ENCODE measurements at regions of chr4 and their contacts with region 1.

Region 1: DNA sequence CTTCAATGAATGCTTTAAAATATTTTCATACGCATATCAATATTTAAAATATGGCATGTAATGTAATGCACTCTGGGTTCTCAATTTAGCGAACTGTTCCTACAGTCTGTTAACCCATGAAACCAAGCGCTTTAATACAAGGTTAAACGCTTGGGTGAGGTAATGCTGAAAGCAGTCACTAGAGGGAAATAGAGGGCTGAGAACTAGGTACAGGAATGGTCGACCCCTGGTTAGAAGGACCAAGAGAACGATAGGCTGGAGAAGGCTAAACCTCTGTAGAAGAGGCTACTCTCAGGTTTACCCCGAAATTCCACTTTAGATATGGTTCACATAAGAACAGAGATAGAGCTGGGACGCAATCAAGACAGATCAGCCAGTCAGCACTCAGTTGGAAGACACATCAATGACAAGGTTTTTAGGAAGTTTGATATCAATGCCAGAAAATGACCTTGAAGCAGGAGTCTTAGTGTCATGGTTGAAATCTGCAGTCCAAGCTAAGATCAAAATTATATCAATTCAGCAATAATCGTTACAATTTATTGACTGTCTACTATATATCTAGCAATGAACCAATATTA is 26.9 kb downstream of the ARSJ start:
- DNase-seq: no peak
- ATAC-seq: peak; percentile 59 to 88
- H3K4me3 ChIP-seq: no peak overlapping the region
- H3K27ac ChIP-seq: no peak overlapping the region
- H3K4me1 ChIP-seq: peaks cover 2% of the 10 kb centered on the region
- H3K27me3 ChIP-seq: no peaks in the 10 kb centered on the region

Region 2: DNA sequence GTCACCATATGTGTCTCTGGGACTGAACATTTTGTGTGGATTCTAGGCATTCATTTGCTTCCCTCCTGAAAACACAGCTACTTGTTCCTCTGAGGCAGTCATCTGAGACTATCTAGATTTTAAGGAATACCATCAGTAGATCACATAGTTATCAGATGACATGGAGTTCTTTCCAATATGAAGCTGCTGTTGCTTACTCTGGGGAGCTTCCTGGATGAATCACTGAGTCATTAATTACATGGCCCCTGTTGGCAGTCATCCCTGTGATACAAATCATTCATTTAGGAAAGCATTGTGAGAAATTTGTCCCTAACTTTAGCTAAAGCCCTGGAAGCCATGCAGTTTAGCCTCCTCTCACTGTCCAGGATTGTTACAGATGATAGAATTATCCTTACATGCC is 125.1 kb after region 1 on chr4:
- intact Hi-C with region 1: loop called in 1 of 4 experiments (anchors 10 kb)
- DNase-seq: no peak
- ATAC-seq: no peak
- H3K4me3 ChIP-seq: no peak overlapping the region
- H3K27ac ChIP-seq: no peak overlapping the region
- H3K4me1 ChIP-seq: no peaks in the 10 kb centered on the region
- H3K27me3 ChIP-seq: no peaks in the 10 kb centered on the region

Measured in right cardiac atrium (tissue), 5 donors.